ENCODE measurements at regions of chr7 and their contacts with region 1.

Region 1: DNA sequence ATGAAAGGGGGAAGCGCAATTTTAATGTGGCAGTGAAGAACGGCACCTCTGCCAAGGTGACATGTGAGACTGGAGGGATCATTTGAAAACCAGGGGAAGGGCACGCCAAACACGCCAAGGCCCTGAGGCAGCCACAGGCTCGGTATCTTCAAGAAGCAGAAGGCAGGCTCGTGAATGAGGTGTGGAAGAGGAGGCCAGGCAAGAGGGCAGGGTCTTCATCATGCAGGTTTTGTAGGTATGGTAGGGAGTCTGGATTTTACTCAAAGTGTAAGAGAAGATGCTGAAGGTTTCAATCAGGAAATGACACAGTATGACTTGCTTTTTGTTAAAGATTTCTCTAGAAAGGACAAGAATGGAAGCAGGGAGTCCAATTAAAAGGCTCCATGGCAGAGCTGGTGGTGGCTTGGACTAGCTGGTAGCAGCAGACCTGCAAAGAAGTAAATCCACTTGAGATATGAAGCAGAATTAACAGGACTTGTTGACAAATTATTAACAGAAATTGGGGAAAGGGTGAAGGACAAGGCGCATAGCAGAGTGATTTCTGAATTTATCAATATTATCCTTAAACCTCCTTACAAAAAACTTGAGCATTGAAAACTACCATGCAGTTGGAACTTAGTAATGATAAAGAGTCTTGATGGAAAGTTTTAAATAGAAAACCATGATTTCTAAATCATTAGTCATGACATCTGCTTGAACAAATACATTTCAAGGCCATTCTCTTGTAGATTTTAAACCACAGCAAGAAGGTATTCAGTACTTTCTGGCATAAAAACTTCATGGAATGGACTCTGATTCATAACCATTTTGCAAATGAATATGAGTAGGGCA is 70.4 kb downstream of the COA1 start:
- DNase-seq: no peak
- H3K4me3 Mint-ChIP-seq: peak overlapping the region; percentile 66
- H3K27ac Mint-ChIP-seq: peak overlapping the region; percentile 95
- H3K4me1 Mint-ChIP-seq: peaks cover 49% of the 10 kb centered on the region
- H3K27me3 Mint-ChIP-seq: no peaks in the 10 kb centered on the region

Region 2: DNA sequence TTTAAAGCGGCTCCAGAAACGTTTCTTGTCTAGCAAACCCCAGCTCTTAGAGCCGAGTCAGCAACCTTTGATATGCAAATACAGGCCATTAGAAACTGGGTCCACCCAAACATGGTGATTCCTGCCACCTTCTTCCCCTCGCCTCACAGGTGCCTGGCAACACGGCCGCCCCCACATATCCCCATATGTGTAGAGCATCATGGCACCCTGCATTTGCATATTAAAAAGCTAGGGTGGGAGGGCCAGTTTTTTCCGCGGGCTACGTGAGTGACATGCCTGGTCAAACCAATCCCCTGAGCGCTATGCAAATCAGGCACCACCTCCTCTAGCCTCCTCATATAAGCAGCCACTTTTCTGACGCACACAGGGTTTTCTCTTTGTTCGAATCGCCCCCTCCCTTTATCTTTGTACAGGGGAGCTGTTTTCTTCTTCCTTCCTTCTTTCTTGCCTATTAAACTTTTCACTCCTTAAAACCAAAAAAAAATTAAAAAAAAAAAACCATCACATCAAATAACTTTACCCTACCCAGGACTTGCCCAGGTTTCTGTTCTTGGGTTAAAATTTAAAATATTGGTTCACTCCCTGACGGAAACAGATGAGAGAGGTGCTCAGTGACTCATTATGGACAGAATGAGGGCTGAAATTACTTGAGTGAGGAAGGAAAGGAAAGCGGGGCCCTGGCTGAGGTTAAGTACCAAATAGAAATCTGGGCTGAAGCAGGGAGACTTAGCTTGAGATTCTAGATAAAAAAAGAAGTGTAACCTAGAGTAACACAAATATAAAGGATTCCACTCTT is 10.6 kb after region 1 on chr7:
- intact Hi-C with region 1: loop called (anchors 1 kb)
- DNase-seq: peak; percentile 29
- H3K4me3 Mint-ChIP-seq: peak overlapping the region; percentile 65
- H3K27ac Mint-ChIP-seq: peak overlapping the region; percentile 91
- H3K4me1 Mint-ChIP-seq: peaks cover 51% of the 10 kb centered on the region
- H3K27me3 Mint-ChIP-seq: no peaks in the 10 kb centered on the region

Measured in activated T-helper 1 cell treated with anti-CD3 and anti-CD28 coated beads, Interleukin-12 subunit alpha, Interleukin-12 subunit beta, Interleukin-2, Interleukin-4 antibody, amounts not matched to agents 30 ng/mL and 10 ng/mL and 1 ng/mL, durations not matched to agents 14 hours and 24 hours and 36 hours (primary cell).